ENCODE measurements at regions of chrX and their contacts with region 1.

Region 1: GRCh38 chrX:140057001-140057411 is 91.7 kb upstream of the CXorf66 start:
- DNase-seq: peak; percentile 58
- CTCF ChIP-seq: peak; percentile 65

Region 2: DNA sequence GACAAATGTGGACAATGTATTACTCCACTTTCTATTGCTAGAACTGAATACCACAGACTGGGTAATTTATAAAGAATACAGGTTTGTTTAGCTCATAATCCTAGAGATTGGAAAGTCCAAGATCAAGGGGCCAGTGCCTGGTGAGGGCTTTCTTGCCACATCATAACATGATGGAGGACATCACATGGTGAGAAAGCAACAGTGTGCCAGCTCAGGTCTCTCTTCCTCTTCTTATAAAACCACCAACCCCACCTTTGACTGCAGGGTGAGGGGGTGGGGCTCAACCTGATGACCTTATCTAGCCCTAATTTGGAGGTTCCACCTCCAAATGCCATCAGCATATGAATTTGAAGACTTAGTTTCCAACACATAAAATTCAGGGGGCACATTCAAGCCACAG is 14.0 kb after region 1 on chrX:
- CTCF ChIA-PET with region 1: no interaction called
- POLR2A ChIA-PET with region 1: no interaction called
- DNase-seq: no peak
- CTCF ChIP-seq: no peak

Region 3: DNA sequence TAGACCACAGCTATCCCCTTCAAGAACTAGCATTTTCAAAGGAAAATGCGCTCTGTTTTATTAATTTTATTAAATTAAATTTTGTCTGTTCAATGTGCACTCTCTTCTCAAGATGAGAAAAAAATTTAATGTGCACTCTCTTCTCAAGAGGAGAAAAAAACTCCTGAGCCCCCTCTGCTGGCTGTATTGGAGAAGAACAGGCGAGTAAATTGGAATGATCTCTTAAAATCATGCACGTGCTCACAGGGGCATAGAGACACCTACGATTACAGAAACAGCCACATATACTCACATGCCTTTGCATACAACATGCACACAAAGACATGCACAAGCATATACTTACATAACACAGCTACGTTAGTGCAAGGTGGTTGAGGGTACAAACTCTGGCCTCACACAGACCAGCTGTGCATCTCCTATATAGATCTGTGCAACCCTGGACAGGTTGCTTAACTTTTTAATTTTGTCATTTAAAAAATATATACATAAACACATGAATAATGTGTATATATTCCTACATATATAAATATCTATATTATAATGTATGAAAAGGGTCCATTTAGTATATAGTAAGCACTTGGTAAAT is 84.5 kb after region 1 on chrX:
- CTCF ChIA-PET with region 1: interaction called, 13 read pairs
- POLR2A ChIA-PET with region 1: no interaction called
- DNase-seq: peak; percentile 34
- CTCF ChIP-seq: peak; percentile 47

Region 4: DNA sequence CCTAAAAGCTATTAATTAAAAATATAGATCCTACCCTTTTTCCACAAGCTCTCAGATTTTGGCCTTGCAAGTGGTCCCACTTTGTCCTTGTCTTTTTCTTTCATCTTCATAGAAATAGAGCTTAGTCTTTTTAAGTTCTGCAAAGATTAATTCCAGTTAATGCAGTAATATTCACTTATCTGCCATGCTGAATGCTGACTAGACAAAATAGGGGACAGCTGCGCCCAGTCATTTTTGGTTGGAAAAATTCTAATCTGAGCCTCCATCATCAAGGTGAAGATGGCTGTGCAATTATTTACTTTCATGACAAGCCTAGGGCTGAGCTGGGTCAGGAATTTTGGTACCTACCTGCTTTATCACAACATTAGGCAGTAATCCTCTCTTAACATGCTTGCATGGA is 149.7 kb after region 1 on chrX:
- CTCF ChIA-PET with region 1: no interaction called
- POLR2A ChIA-PET with region 1: no interaction called
- DNase-seq: no peak
- CTCF ChIP-seq: no peak

Measured in GM10248 (cell line).